ENCODE measurements at regions of chr7 and their contacts with region 1.

Region 1: GRCh38 chr7:134986363-134987251 is at the start of gene AGBL3:
- DNase-seq: peak; percentile 93
- H3K4me3 ChIP-seq: peak within 1 kb of the TSS; percentile 65 to 70
- H3K27ac ChIP-seq: peak within 1 kb of the TSS; percentile 90 to 91
- H3K4me1 ChIP-seq: no peaks in the 10 kb centered on the region
- H3K27me3 ChIP-seq: no peaks in the 10 kb centered on the region
- CTCF ChIP-seq: peak; percentile 75 to 86 (median 77)
- POLR2A ChIP-seq: no peak
- total RNA-seq, gene AGBL3: 1.4 to 2.6 TPM

Region 2: GRCh38 chr7:134865001-134865845 is 121.4 kb before region 1 on chr7:
- intact Hi-C with region 1: no loop called
- DNase-seq: no peak
- H3K4me3 ChIP-seq: no peak overlapping the region
- H3K27ac ChIP-seq: peak overlapping the region; percentile 30 to 47
- H3K4me1 ChIP-seq: no peaks in the 10 kb centered on the region
- H3K27me3 ChIP-seq: no peaks in the 10 kb centered on the region
- CTCF ChIP-seq: no peak
- POLR2A ChIP-seq: no peak

Region 3: GRCh38 chr7:135147899-135148721 is 161.5 kb after region 1 on chr7 and contains the start of gene TMEM140:
- intact Hi-C with region 1: loop called (anchors 5 kb)
- DNase-seq: peak; percentile 61
- H3K4me3 ChIP-seq: peak within 1 kb of the TSS; percentile 31 to 46
- H3K27ac ChIP-seq: peak within 1 kb of the TSS; percentile 89 to 95
- H3K4me1 ChIP-seq: peaks cover 5% of the 10 kb centered on the region
- H3K27me3 ChIP-seq: no peaks in the 10 kb centered on the region
- CTCF ChIP-seq: peak in 2 of 4 experiments; percentile 23 to 25
- POLR2A ChIP-seq: peak; percentile 69
- total RNA-seq, gene TMEM140: 8.2 to 14.6 TPM

Region 4: GRCh38 chr7:135170274-135170997 is 183.8 kb after region 1 on chr7 and contains the start of gene CYREN:
- intact Hi-C with region 1: loop called (anchors 5 kb)
- DNase-seq: peak; percentile 92
- H3K4me3 ChIP-seq: peak within 1 kb of the TSS; percentile 69 to 72
- H3K27ac ChIP-seq: peak within 1 kb of the TSS; percentile 90 to 91
- H3K4me1 ChIP-seq: peaks cover 3% of the 10 kb centered on the region
- H3K27me3 ChIP-seq: no peaks in the 10 kb centered on the region
- CTCF ChIP-seq: peak; percentile 62 to 92 (median 82)
- POLR2A ChIP-seq: peak; percentile 51
- total RNA-seq, gene CYREN: 44.5 to 53.6 TPM